ENCODE measurements at regions of chr7 and their contacts with region 1.

Region 1: GRCh38 chr7:51141451-51142003 is 175.1 kb downstream of the COBL start:
- DNase-seq: no peak
- ATAC-seq: peak; percentile 57
- H3K4me3 Mint-ChIP-seq: no peak overlapping the region
- H3K27ac Mint-ChIP-seq: peak overlapping the region; percentile 4; the same call in 1 of the 2 replicates
- H3K4me1 Mint-ChIP-seq: peaks cover 42% of the 10 kb centered on the region
- H3K27me3 Mint-ChIP-seq: no peaks in the 10 kb centered on the region
- CTCF ChIP-seq: no peak; the same call in 1 of the 2 replicates

Region 2: DNA sequence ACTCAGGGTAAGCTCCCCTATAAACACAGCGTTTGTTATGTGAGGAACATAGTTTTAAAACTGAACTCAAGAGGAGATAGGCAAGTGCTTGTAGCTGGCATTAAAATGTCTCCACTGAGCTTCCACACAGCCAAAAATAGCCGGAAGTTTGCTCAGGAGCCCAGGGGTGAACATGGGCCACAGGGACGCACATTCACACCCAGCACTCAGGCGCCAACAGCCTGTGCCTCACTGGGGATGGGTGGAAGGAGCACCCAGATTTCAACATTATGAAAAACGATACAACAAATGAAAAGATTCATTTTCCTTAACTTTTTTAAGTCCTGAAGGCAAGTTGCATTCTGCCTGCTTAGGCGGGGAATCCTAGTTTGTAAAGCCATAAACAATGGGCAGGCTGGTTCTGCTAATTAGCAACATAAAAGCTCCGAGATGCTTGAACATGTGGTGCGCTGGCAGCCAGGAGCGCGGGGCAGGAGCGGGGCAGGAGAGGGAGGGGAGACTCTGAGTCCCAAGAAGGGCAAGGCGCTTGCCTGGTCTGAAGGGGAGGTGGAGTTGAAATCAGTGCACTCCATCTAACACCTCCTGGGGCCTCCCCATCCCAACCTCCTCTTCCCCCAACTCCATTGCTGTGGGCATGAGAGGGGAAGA is 60.8 kb before region 1 on chr7:
- CTCF ChIA-PET with region 1: interaction called, 10 read pairs
- POLR2A ChIA-PET with region 1: no interaction called
- DNase-seq: peak; percentile 81
- ATAC-seq: peak; percentile 94
- H3K4me3 Mint-ChIP-seq: no peak overlapping the region
- H3K27ac Mint-ChIP-seq: peak overlapping the region; percentile 89
- H3K4me1 Mint-ChIP-seq: peaks cover 57% of the 10 kb centered on the region
- H3K27me3 Mint-ChIP-seq: no peaks in the 10 kb centered on the region
- CTCF ChIP-seq: no peak

Region 3: GRCh38 chr7:51154201-51154600 is 12.7 kb after region 1 on chr7:
- CTCF ChIA-PET with region 1: interaction called, 10 read pairs
- POLR2A ChIA-PET with region 1: interaction called, 3 read pairs
- DNase-seq: no peak
- ATAC-seq: no peak
- H3K4me3 Mint-ChIP-seq: no peak overlapping the region
- H3K27ac Mint-ChIP-seq: no peak overlapping the region
- H3K4me1 Mint-ChIP-seq: peaks cover 23% of the 10 kb centered on the region
- H3K27me3 Mint-ChIP-seq: no peaks in the 10 kb centered on the region
- CTCF ChIP-seq: no peak